H1 (cell line): ENCODE measurements at regions of chr9 and their contacts with region 1.

Region 1: DNA sequence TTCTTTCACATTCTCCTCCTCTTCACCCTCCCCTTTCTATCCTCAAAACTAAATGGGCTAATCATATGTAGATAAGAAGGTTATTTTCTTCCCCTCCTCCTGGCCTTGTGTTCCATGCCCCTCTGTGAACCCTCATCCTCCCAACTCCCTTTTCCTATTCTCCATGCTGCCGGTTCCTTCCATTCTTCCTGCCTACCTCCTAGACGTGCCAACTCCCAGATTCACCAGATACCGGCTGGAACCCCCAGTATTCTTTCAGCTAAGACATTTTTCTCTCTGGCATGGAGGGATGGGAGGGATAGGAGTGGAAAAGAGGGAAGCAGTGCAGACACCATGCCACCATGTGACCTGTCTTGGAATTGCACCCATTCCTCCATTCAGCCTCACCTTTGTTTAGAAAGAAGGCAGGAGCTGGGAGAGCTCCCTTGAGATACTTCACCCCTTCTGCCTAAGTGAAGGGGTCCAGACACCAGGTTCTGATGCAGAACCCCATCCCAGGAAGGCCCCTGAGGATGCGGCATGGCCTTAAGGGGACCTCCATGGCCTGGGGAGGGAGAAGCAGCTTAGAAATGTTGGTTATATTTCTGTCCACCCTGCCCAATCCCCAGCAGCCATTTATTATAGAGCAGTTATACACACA is 4.8 kb downstream of the DNAJB5 start:
- DNase-seq: peak in 1 of 2 experiments; percentile 71
- H3K4me3 ChIP-seq: no peak overlapping the region
- H3K27ac ChIP-seq: peak overlapping the region; percentile 35; the same call in 1 of the 2 replicates
- H3K4me1 ChIP-seq: peaks cover 18 to 36% (median 30%) of the 10 kb centered on the region in 4 experiments
- H3K27me3 ChIP-seq: no peaks in the 10 kb centered on the region
- CTCF ChIP-seq: peak; percentile 61 to 85 (median 73)
- EP300 ChIP-seq: no peak
- POLR2A ChIP-seq: no peak
- RAD21 ChIP-seq: peak; percentile 73 to 78

Region 2: DNA sequence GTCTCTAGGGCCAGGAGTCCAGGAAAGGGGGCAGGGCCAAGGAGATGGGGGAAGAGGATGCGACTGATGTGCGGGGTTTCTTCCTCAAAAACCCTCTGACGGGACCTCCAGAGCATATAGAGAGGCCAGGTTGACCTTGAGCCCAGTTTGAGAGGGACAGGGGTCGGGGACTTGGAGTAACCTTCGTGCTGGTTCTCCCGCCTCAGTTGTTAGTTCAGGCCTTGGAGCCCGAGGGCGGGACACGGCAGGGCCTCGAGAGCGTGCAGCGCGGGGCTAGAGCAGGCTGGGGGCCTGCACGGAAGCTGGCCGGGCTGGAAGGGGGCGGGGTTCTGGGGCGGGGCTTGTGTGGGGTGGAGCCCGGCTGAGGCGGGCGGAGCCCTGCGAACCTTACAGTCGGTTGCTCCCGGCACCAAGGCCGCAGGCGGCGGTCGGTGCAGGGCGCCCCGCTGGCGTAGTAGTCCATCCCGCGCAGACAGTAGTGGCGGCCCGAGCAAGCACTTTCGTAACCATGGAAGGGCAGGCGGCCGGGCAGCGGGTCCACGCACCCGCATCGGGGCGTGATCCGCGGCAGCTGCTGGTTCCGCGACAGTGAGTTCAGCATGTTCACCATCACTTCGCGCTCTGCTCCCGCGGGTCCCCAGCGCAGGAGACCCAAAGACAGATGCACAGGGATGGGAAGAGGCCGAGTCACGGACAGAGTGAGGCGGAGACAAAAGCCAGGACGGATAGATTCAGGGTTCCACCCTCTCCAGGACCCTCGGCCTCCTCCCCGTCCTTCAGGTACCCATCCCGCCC is 613.7 kb before region 1 on chr9:
- CTCF ChIA-PET with region 1: no interaction called
- POLR2A ChIA-PET with region 1: no interaction called
- DNase-seq: peak in 1 of 2 experiments; percentile 88
- H3K4me3 ChIP-seq: peak overlapping the region; percentile 59 to 76 (median 64)
- H3K27ac ChIP-seq: no peak overlapping the region
- H3K4me1 ChIP-seq: peaks cover 3 to 15% (median 7%) of the 10 kb centered on the region in 4 experiments
- H3K27me3 ChIP-seq: peaks cover 3 to 32% (median 31%) of the 10 kb centered on the region in 4 experiments
- CTCF ChIP-seq: no peak
- EP300 ChIP-seq: no peak
- POLR2A ChIP-seq: peak in 1 of 2 experiments; percentile 31; a peak in 1 of 3 replicates
- RAD21 ChIP-seq: no peak

Region 3: GRCh38 chr9:35010351-35010958 is 16.1 kb after region 1 on chr9:
- CTCF ChIA-PET with region 1: interaction called, 11 read pairs
- POLR2A ChIA-PET with region 1: interaction called, 5 read pairs
- DNase-seq: no peak
- H3K4me3 ChIP-seq: no peak overlapping the region
- H3K27ac ChIP-seq: no peak overlapping the region
- H3K4me1 ChIP-seq: 0 out of 7 replicates have a peak, but pooled peaks cover 0 to 2% (median 0%) of the 10 kb centered on the region in 4 experiments
- H3K27me3 ChIP-seq: no peaks in the 10 kb centered on the region
- CTCF ChIP-seq: no peak
- EP300 ChIP-seq: no peak
- POLR2A ChIP-seq: no peak
- RAD21 ChIP-seq: no peak

Region 4: DNA sequence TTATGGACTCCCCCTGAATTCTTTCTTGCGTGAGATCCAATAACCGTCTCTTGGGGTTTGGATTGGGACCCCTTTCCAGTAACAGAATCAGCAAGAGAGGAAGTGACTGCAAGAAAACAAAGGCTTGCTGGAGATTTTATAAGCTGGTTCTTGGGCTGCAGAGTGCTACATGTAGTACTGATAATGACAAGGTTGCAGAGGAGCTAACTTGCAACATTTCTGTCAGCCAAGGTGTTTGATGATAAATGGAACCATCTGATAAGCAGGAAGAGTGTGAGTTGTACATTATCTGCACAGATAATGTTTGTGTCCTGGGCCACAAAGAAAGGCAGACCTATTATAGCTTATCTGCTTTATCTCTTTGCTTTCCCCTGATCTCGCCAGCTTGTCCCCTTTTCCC is 32.3 kb after region 1 on chr9:
- CTCF ChIA-PET with region 1: interaction called, 10 read pairs
- POLR2A ChIA-PET with region 1: interaction called, 4 read pairs
- DNase-seq: no peak
- H3K4me3 ChIP-seq: no peak overlapping the region
- H3K27ac ChIP-seq: peak overlapping the region; percentile 44; the same call in 1 of the 2 replicates
- H3K4me1 ChIP-seq: peaks cover 0 to 10% (median 3%) of the 10 kb centered on the region in 4 experiments; a peak in 3 of 7 replicates
- H3K27me3 ChIP-seq: no peaks in the 10 kb centered on the region
- CTCF ChIP-seq: no peak
- EP300 ChIP-seq: no peak
- POLR2A ChIP-seq: no peak
- RAD21 ChIP-seq: no peak

Region 5: GRCh38 chr9:35051069-35051967 is 56.9 kb after region 1 on chr9:
- CTCF ChIA-PET with region 1: interaction called, 43 read pairs
- POLR2A ChIA-PET with region 1: interaction called, 12 read pairs
- DNase-seq: peak in 1 of 2 experiments; percentile 84
- H3K4me3 ChIP-seq: no peak overlapping the region
- H3K27ac ChIP-seq: no peak overlapping the region
- H3K4me1 ChIP-seq: no peaks in the 10 kb centered on the region
- H3K27me3 ChIP-seq: no peaks in the 10 kb centered on the region
- CTCF ChIP-seq: peak in 2 of 3 experiments; percentile 63 to 78; a peak in 3 of 4 replicates
- EP300 ChIP-seq: no peak
- POLR2A ChIP-seq: no peak
- RAD21 ChIP-seq: peak; percentile 58 to 64

Region 6: GRCh38 chr9:35193762-35194161 is 199.4 kb after region 1 on chr9:
- CTCF ChIA-PET with region 1: no interaction called
- POLR2A ChIA-PET with region 1: no interaction called
- DNase-seq: no peak
- H3K4me3 ChIP-seq: no peak overlapping the region
- H3K27ac ChIP-seq: no peak overlapping the region
- H3K4me1 ChIP-seq: no peaks in the 10 kb centered on the region
- H3K27me3 ChIP-seq: no peaks in the 10 kb centered on the region
- CTCF ChIP-seq: peak in 1 of 3 experiments; percentile 5; a peak in 2 of 4 replicates
- EP300 ChIP-seq: no peak
- POLR2A ChIP-seq: no peak
- RAD21 ChIP-seq: peak; percentile 27 to 44; a peak in 3 of 4 replicates

Region 7: DNA sequence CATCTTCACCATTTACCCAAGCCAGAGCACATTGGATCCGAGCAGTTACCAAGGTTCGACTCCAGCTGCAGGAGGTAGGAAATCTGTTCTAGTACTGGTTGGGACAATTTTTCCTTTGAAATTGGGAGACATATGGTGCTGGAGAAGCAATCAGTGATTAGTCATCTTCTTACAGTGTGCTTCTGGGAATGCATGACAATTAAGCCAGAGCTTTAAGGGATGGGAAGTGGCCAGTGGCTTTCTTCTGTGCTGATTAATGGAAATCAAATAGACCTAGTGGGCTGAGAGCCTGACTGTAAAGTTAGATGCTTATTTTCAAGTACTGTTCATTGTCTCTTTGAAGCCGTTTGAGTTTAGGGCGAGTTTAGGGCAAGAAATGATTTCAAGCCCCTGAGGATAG is 319.5 kb after region 1 on chr9:
- CTCF ChIA-PET with region 1: no interaction called
- POLR2A ChIA-PET with region 1: no interaction called
- DNase-seq: no peak
- H3K4me3 ChIP-seq: no peak overlapping the region
- H3K27ac ChIP-seq: no peak overlapping the region
- H3K4me1 ChIP-seq: no peaks in the 10 kb centered on the region
- H3K27me3 ChIP-seq: no peaks in the 10 kb centered on the region
- CTCF ChIP-seq: no peak
- EP300 ChIP-seq: no peak
- POLR2A ChIP-seq: no peak
- RAD21 ChIP-seq: no peak